CD8-positive, alpha-beta memory T cell (primary cell): ENCODE measurements at regions of chr10 and their contacts with region 1.

Region 1: DNA sequence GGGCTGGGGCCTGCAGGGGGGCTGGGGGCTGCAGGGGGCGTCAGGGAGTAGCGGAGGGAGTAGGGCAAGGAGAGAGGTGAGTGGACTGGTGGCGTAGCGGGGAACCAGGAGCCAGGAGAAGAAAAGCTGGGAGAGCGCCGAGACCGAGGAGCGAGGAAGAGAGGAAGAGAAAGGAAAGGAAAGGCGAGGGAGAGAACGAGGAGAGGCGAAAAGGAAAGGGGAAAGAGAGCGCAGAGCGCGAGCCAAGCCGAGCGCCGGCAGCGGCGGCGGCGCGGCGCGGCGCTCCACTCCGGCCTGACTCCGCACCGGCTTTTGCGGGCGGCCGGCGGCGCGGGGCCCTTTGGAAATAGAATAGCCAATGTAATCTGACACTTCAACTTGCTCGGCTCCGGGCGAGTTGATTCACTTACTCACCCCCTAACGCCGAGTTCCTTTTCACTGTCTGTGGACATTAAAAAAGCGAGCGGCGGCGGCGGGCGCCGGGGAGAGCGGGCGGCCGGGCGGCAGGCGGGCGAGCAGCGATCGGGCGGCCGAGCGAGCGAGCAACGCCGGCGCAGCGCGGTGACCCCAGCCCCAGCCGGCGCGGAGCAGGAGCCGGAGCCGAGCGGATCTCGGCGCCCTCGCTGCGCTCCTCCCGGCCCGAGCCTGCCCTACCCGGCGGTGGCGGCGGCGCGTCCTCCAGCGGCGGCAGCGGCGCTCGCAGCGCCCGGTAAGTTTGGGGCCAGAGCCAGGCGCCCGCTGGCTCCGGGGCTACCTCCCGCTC is at the start of gene ZMIZ1:
- DNase-seq: peak; percentile 66 to 86 (median 81)
- H3K4me3 ChIP-seq: peak within 1 kb of the TSS; percentile 90
- H3K4me3 Mint-ChIP-seq: peak within 1 kb of the TSS; percentile 94 to 99 (median 96)
- H3K27ac ChIP-seq: peak within 1 kb of the TSS; percentile 74
- H3K27ac Mint-ChIP-seq: peak within 1 kb of the TSS; percentile 80 to 99 (median 92)
- H3K4me1 ChIP-seq: peaks cover 21% of the 10 kb centered on the region
- H3K4me1 Mint-ChIP-seq: peaks cover 31 to 63% (median 46%) of the 10 kb centered on the region in 3 donors
- H3K27me3 ChIP-seq: no peaks in the 10 kb centered on the region
- H3K27me3 Mint-ChIP-seq: peaks cover 0 to 6% of the 10 kb centered on the region in 2 donors
- total RNA-seq, gene ZMIZ1: 34.7 to 36.3 TPM

Region 2: DNA sequence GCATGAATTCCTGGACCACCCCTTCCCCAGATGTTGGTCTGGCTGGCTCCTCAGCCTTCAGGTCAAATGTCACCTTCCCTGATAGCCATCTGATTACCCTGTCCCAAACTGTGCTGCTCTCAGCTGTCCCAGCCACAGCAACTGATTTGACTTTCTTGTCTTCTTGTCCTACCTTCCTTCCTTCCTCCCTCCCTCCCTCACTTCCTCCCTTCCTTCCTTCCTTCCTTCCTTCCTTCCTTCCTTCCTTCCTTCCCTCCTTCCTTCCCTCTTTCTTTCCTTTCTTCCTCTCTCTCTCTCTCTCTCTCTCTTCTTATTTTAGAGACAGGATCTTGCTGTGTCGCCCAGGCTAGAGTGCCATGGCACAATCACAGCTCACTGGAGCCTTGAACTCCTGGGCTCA is 792.6 kb before region 1 on chr10:
- CTCF ChIA-PET with region 1: no interaction called
- POLR2A ChIA-PET with region 1: interaction called, 21 read pairs
- DNase-seq: no peak
- H3K4me3 ChIP-seq: no peak overlapping the region
- H3K4me3 Mint-ChIP-seq: no peak overlapping the region
- H3K27ac ChIP-seq: no peak overlapping the region
- H3K27ac Mint-ChIP-seq: no peak overlapping the region
- H3K4me1 ChIP-seq: no peaks in the 10 kb centered on the region
- H3K4me1 Mint-ChIP-seq: peaks cover 0 to 4% (median 0%) of the 10 kb centered on the region in 3 donors
- H3K27me3 ChIP-seq: no peaks in the 10 kb centered on the region
- H3K27me3 Mint-ChIP-seq: peaks cover 21 to 29% of the 10 kb centered on the region in 2 donors

Region 3: DNA sequence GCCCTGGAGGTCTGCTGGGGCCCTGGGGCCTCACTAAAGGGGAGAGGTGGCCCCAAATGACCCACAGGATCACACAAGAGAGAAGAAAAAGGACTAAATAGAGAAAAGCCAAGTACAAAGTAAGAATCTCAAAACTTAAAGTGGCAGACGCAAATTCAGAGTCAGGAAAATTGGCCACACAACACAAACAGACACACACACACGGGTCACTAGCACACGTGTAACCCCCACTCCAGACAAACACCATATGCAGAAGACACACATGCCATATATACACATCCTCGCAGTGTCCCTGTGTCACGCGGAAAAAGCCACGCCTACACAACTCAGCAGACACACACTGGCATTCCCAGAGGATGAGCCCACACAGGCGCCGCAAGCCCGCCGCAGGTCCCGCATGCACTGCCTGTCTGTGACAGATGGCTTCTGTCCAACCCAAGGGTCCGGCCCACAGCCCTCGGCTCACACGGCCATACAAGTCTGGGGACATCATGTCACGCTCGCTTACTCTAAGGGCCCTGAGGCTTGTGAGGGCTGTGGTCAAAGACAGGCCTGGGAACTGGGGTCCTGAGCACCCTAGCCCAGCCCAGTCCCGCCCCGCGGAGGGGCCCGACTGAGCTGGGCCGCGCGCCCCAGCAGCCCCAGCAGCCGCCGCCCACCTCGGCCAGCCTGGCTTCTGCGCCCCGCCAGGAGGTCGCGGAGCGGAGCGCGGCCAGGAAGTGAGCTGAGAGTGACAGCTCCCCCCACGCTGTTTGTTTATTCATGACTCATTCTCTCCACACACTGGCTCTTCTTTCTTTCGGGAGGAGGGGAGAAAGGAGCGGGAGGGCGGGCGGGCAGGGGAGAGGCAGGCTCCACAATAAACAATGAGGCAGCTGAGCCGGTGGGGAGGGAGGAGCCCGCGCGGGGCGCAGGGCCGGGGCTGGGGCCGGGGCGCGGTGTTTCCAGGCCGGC is 95.5 kb before region 1 on chr10:
- CTCF ChIA-PET with region 1: interaction called, 6 read pairs
- POLR2A ChIA-PET with region 1: interaction called, 10 read pairs
- DNase-seq: peak; percentile 50 to 85 (median 61)
- H3K4me3 ChIP-seq: peak overlapping the region; percentile 30
- H3K4me3 Mint-ChIP-seq: peak overlapping the region; percentile 74 to 97 (median 82)
- H3K27ac ChIP-seq: peak overlapping the region; percentile 75
- H3K27ac Mint-ChIP-seq: peak overlapping the region; percentile 59 to 91 (median 72)
- H3K4me1 ChIP-seq: peaks cover 6% of the 10 kb centered on the region
- H3K4me1 Mint-ChIP-seq: peaks cover 12 to 24% (median 19%) of the 10 kb centered on the region in 3 donors
- H3K27me3 ChIP-seq: no peaks in the 10 kb centered on the region
- H3K27me3 Mint-ChIP-seq: no peaks in the 10 kb centered on the region

Region 4: GRCh38 chr10:79038841-79039201 is 29.9 kb before region 1 on chr10:
- CTCF ChIA-PET with region 1: no interaction called
- POLR2A ChIA-PET with region 1: no interaction called
- DNase-seq: no peak
- H3K4me3 ChIP-seq: no peak overlapping the region
- H3K4me3 Mint-ChIP-seq: no peak overlapping the region
- H3K27ac ChIP-seq: no peak overlapping the region
- H3K27ac Mint-ChIP-seq: no peak overlapping the region
- H3K4me1 ChIP-seq: no peaks in the 10 kb centered on the region
- H3K4me1 Mint-ChIP-seq: peaks cover 10 to 30% (median 24%) of the 10 kb centered on the region in 3 donors
- H3K27me3 ChIP-seq: no peaks in the 10 kb centered on the region
- H3K27me3 Mint-ChIP-seq: peaks cover 6 to 19% of the 10 kb centered on the region in 2 donors